ENCODE measurements at regions of chr20 and their contacts with region 1.

Region 1: GRCh38 chr20:35771689-35772562 is at the start of gene PHF20:
- DNase-seq: peak; percentile 99 to 100
- ATAC-seq: peak; percentile 97
- H3K4me3 ChIP-seq: peak within 1 kb of the TSS; percentile 66 to 86
- H3K27ac ChIP-seq: peak within 1 kb of the TSS in 1 of 2 donors; percentile 96
- H3K4me1 ChIP-seq: no peaks in the 10 kb centered on the region
- H3K27me3 ChIP-seq: no peaks in the 10 kb centered on the region
- total RNA-seq, gene PHF20: 48.7 to 64.4 TPM

Region 2: GRCh38 chr20:35741892-35742740 is 29.8 kb before region 1 on chr20 and contains the start of gene RBM39:
- intact Hi-C with region 1: loop called (anchors 2 to 5 kb)
- DNase-seq: peak; percentile 99 to 100
- ATAC-seq: peak; percentile 99
- H3K4me3 ChIP-seq: peak within 1 kb of the TSS; percentile 85 to 96
- H3K27ac ChIP-seq: peak within 1 kb of the TSS; percentile 94 to 99
- H3K4me1 ChIP-seq: peaks cover 0 to 4% of the 10 kb centered on the region in 2 donors
- H3K27me3 ChIP-seq: no peaks in the 10 kb centered on the region
- total RNA-seq, gene RBM39: 293 to 383 TPM

Region 3: GRCh38 chr20:35837577-35838198 is 65.8 kb after region 1 on chr20:
- intact Hi-C with region 1: no loop called
- DNase-seq: no peak
- ATAC-seq: no peak
- H3K4me3 ChIP-seq: no peak overlapping the region
- H3K27ac ChIP-seq: no peak overlapping the region
- H3K4me1 ChIP-seq: no peaks in the 10 kb centered on the region
- H3K27me3 ChIP-seq: no peaks in the 10 kb centered on the region

Region 4: GRCh38 chr20:35883778-35884540 is 112.0 kb after region 1 on chr20:
- intact Hi-C with region 1: loop called in 1 of 2 experiments (anchors 10 kb)
- DNase-seq: peak; percentile 82 to 89
- ATAC-seq: peak; percentile 94
- H3K4me3 ChIP-seq: no peak overlapping the region
- H3K27ac ChIP-seq: peak overlapping the region; percentile 61 to 95
- H3K4me1 ChIP-seq: no peaks in the 10 kb centered on the region
- H3K27me3 ChIP-seq: no peaks in the 10 kb centered on the region